A673 (cell line): ENCODE measurements at regions of chr16 and their contacts with region 1.

Region 1: DNA sequence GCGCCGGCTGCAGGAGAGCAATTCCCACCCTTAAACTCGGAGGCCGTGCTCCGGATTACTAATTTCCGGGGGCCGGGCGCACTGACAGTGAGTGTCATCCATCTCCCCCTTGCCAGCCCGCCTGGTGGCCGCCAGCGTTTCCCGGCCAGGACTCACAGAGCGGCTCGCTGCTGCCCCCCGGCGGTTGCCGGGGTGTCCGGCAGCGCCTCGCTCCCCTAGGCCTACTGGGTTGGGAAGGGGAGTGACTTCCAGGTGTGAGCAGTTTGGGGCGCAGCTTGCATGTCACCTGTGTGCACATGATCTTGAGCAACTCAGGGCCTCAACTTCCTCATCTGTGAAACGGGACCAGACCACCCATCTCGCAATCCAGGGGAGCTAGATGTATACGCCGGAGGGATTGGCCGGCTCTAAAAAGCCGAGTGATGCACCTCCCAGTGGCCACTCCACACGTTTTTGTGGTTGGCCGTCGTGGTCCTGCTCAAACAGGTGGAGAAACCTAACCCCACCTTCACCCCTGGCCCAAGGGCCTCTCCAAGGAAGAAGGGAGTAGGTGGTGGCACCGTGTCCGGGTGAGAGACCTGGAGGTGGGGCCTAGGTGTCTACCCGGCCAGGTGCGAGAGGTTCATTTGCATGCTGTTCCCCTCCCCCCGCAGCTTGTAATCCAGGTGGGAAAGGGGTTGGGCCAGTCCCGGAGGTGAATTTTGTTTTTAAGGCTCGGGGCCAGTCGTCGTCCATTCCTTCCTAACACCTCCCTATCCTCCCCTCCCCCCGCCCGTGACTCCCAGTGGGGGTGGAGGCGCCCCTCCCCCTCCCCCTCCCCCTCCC is 2.4 kb upstream of the GSE1 start:
- DNase-seq: peak; percentile 96
- H3K4me3 ChIP-seq: peak overlapping the region; percentile 86
- H3K27ac ChIP-seq: peak overlapping the region; percentile 90
- H3K4me1 ChIP-seq: peaks cover 62% of the 10 kb centered on the region
- H3K27me3 ChIP-seq: no peaks in the 10 kb centered on the region
- CTCF ChIP-seq: peak; percentile 99

Region 2: GRCh38 chr16:85114909-85115567 is 495.7 kb before region 1 on chr16:
- CTCF ChIA-PET with region 1: no interaction called
- POLR2A ChIA-PET with region 1: no interaction called
- intact Hi-C with region 1: loop called (anchors 5 kb)
- DNase-seq: peak; percentile 83
- H3K4me3 ChIP-seq: peak overlapping the region; percentile 18
- H3K27ac ChIP-seq: peak overlapping the region; percentile 55
- H3K4me1 ChIP-seq: peaks cover 4% of the 10 kb centered on the region
- H3K27me3 ChIP-seq: no peaks in the 10 kb centered on the region
- CTCF ChIP-seq: peak; percentile 98

Region 3: GRCh38 chr16:85275533-85276249 is 335.0 kb before region 1 on chr16:
- CTCF ChIA-PET with region 1: no interaction called
- POLR2A ChIA-PET with region 1: no interaction called
- intact Hi-C with region 1: loop called (anchors 5 kb)
- DNase-seq: peak; percentile 74
- H3K4me3 ChIP-seq: no peak overlapping the region
- H3K27ac ChIP-seq: no peak overlapping the region
- H3K4me1 ChIP-seq: no peaks in the 10 kb centered on the region
- H3K27me3 ChIP-seq: no peaks in the 10 kb centered on the region
- CTCF ChIP-seq: peak; percentile 95

Region 4: DNA sequence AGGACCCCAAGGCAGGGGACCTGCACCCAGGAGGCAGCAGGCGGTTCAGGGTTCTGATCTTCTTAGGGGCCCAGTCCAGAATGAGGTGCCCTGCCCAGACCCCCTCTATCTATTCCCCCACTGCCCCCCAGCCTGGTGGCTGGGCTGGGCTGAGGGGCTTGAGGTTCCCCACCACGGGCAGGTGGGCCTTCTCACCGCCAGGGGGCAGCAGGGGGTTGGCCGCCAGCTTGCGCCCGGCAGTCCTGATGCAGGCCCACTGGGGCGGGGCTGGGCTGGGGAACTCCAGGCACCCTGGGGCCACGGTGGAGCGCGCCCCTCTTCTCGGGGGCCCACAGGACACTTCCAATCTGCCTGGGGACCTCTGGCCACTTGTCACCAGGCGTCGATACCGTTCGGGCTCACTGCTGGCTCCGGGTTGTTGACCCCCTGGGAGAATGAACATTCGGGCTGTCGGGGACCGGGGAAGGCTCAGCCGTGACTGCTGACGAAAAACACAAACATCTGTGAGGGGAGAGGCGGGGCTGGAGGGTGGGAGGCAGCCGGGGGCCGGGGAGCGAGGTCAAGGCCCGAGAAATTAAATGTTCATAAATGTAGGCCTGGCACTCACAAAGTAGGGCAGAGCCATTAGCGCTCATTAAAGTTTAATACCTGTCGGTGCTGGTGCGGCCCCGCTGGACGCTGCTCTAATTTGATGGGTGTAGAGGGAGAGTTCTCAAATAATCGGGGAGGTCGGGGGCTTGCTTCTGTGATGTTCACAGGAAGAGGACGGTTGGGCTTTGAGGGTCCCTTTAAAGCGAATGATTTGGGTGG is 216.8 kb before region 1 on chr16:
- CTCF ChIA-PET with region 1: interaction called, 4 read pairs
- POLR2A ChIA-PET with region 1: no interaction called
- intact Hi-C with region 1: loop called (anchors 2 kb)
- DNase-seq: peak; percentile 75
- H3K4me3 ChIP-seq: no peak overlapping the region
- H3K27ac ChIP-seq: no peak overlapping the region
- H3K4me1 ChIP-seq: peaks cover 43% of the 10 kb centered on the region
- H3K27me3 ChIP-seq: no peaks in the 10 kb centered on the region
- CTCF ChIP-seq: peak; percentile 96

Region 5: GRCh38 chr16:85420501-85421337 is 190.0 kb before region 1 on chr16:
- CTCF ChIA-PET with region 1: interaction called, 33 read pairs
- POLR2A ChIA-PET with region 1: no interaction called
- intact Hi-C with region 1: loop called (anchors 1 kb)
- DNase-seq: peak; percentile 73
- H3K4me3 ChIP-seq: no peak overlapping the region
- H3K27ac ChIP-seq: peak overlapping the region; percentile 41
- H3K4me1 ChIP-seq: peaks cover 26% of the 10 kb centered on the region
- H3K27me3 ChIP-seq: no peaks in the 10 kb centered on the region
- CTCF ChIP-seq: peak; percentile 99

Region 6: GRCh38 chr16:85554112-85554813 is 56.5 kb before region 1 on chr16:
- CTCF ChIA-PET with region 1: interaction called, 4 read pairs
- POLR2A ChIA-PET with region 1: no interaction called
- intact Hi-C with region 1: loop called (anchors 2 kb)
- DNase-seq: peak; percentile 92
- H3K4me3 ChIP-seq: peak overlapping the region; percentile 89
- H3K27ac ChIP-seq: peak overlapping the region; percentile 44
- H3K4me1 ChIP-seq: peaks cover 23% of the 10 kb centered on the region
- H3K27me3 ChIP-seq: no peaks in the 10 kb centered on the region
- CTCF ChIP-seq: no peak

Region 7: DNA sequence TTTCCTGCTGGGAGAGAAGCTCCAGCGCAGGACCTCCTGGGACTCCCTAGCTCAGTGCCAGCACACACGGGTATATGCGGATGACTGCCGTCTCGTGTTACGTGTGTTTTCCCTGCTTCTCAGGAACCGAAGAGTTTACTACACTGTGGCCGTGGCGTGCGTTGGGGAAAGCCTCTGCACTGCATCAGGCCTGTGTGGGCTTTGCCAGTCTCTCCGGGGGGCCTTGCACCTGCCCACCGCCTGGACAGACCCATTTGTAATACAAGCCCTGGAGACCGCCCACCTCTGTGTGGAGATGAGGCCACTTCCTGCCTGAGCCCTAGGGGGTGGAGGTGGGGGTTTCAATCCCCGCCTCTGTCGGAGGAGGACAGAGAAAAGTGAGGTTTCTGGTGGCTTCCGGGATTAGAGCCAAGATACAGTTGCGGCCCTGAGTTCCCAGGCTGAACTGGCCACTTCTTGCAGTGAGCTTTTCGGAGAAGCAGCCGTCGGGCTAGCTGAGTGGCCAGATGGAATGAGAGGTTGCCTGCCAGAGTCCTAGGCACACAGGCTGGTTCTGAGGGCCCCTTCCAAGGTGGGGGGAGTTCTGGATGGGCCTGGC is 41.0 kb before region 1 on chr16:
- CTCF ChIA-PET with region 1: interaction called, 4 read pairs
- POLR2A ChIA-PET with region 1: no interaction called
- intact Hi-C with region 1: loop called (anchors 5 kb)
- DNase-seq: peak; percentile 94
- H3K4me3 ChIP-seq: no peak overlapping the region
- H3K27ac ChIP-seq: peak overlapping the region; percentile 85
- H3K4me1 ChIP-seq: peaks cover 43% of the 10 kb centered on the region
- H3K27me3 ChIP-seq: no peaks in the 10 kb centered on the region
- CTCF ChIP-seq: no peak